ENCODE measurements at regions of chr12 and their contacts with region 1.

Region 1: DNA sequence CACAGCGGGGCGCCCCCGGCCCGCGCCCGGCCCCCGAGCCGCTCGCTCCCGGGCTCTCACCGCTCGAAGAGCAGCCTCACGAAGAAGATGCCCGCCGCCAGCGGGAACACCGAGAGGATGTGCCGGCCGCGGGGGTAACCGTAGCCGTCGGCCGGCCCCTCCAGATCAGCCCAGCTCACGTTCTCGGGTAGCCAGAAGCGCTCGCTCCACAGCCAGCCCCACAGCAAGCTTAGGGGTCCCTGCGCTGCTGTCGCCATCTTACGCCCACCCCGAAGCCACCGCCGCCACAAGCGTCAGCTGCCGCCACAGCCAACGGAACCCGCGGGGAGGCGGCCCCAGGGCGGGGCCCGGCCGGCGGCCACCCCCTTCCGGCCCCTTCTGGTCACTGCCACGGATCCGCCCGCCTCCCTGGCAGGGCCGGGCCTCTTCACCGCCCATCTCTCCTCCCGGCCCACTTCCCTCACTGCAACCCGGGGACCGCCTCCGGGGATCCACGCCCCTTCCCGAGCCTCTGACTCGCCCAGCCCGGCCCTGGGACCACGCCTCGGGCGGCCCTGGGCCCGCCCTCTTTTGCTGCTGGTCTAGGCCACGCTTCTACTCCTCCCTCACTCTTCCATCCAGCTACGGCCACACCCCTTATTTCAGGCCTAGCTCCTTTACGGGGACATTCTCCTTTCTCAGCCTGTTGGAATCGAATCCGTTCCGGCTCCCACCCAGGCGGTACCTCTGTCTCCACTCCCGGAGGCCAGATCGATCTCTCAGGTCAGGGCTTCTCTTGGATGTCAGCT is at the start of gene CERS5:
- DNase-seq: peak; percentile 97 to 99
- H3K4me3 ChIP-seq: peak within 1 kb of the TSS; percentile 78 to 84
- H3K27ac ChIP-seq: peak within 1 kb of the TSS; percentile 83
- H3K4me1 ChIP-seq: peaks cover 42% of the 10 kb centered on the region
- H3K27me3 ChIP-seq: no peaks in the 10 kb centered on the region
- CTCF ChIP-seq: peak; percentile 2 to 26 (median 21)
- POLR2A ChIP-seq: peak in 1 of 2 donors; percentile 74
- total RNA-seq, gene CERS5: 45.2 TPM

Region 2: GRCh38 chr12:50111693-50112455 is 55.4 kb before region 1 on chr12 and contains the start of gene COX14:
- intact Hi-C with region 1: loop called (anchors 1 kb)
- DNase-seq: peak; percentile 99 to 100
- H3K4me3 ChIP-seq: peak within 1 kb of the TSS; percentile 72 to 92
- H3K27ac ChIP-seq: peak within 1 kb of the TSS; percentile 82
- H3K4me1 ChIP-seq: peaks cover 58% of the 10 kb centered on the region
- H3K27me3 ChIP-seq: no peaks in the 10 kb centered on the region
- CTCF ChIP-seq: peak in 2 of 3 experiments; percentile 64 to 81
- POLR2A ChIP-seq: peak in 1 of 2 donors; percentile 91
- total RNA-seq, gene COX14: 74.4 TPM

Measured in vagina (tissue), 2 donors.